CD4-positive, alpha-beta T cell (primary cell): ENCODE measurements at regions of chr5 and their contacts with region 1.

Region 1: DNA sequence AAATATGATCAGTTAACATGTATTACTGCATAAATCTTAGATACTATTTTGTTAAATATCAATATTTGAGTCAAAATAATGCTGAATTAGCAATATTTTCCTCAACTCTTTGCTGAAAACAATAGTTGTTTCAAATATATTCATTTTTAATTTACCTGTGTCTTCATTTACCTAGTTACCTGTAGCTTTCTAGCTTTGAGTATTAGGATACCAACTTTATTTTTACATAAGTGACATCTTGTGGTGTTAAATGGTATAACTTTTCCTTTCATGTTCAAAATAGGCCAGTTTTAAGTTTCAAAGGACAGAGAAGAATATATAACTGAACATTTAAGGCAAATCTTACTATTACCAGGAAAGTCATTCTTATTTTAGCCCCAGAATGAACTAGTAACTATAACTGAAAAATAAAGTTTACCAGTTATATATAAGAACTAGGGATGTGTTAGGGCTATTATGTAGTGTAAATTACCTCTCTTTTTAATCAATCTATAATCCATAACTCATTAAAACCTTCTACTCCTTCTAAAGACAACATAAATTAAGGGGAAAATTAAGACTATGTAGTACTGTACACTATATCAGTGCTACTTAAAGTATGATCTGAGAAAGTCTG is 25.3 kb downstream of the AP3B1 start:
- DNase-seq: peak in 3 of 14 experiments; percentile 28 to 38 (median 31)
- ATAC-seq: peak; percentile 68
- H3K4me3 ChIP-seq: no peak overlapping the region
- H3K4me3 Mint-ChIP-seq: no peak overlapping the region
- H3K27ac ChIP-seq: no peak overlapping the region
- H3K27ac Mint-ChIP-seq: no peak overlapping the region
- H3K4me1 ChIP-seq: no peaks in the 10 kb centered on the region
- H3K4me1 Mint-ChIP-seq: peaks cover 29% of the 10 kb centered on the region
- H3K27me3 ChIP-seq: no peaks in the 10 kb centered on the region
- H3K27me3 Mint-ChIP-seq: no peaks in the 10 kb centered on the region
- CTCF ChIP-seq: peak; percentile 68

Region 2: DNA sequence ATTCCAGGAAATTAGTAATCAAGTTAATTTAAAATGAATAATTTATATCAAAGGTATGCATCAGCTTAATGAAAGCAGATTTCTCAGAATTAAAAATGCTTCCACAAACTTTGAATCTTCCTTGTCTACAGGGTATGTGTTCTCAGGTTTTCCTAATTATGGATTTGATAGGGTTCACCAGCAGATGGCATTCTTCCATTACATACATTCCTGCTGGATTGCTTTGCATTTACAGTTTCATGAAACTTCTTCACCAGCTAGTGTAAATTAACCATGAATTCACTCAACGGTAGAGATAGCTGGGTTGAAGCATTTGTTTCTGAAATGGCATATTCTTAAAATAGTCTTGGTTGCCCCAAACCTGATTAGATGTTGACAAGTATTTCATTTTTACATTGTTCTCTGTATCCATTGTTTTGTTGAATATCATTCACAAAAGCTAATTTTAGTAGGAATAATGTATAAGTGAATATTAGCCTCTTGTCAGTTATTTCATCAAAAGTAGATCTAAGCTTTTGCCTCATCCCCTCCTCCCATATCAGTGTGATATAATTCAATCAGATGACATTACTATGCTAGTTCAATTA is 708.4 kb before region 1 on chr5:
- CTCF ChIA-PET with region 1: no interaction called
- POLR2A ChIA-PET with region 1: no interaction called
- intact Hi-C with region 1: loop called (anchors 5 to 10 kb)
- DNase-seq: peak in 3 of 14 experiments; percentile 21 to 35 (median 31)
- ATAC-seq: no peak
- H3K4me3 ChIP-seq: no peak overlapping the region
- H3K4me3 Mint-ChIP-seq: no peak overlapping the region
- H3K27ac ChIP-seq: no peak overlapping the region
- H3K27ac Mint-ChIP-seq: no peak overlapping the region
- H3K4me1 ChIP-seq: no peaks in the 10 kb centered on the region
- H3K4me1 Mint-ChIP-seq: no peaks in the 10 kb centered on the region
- H3K27me3 ChIP-seq: peaks cover 3 to 4% of the 10 kb centered on the region in 2 experiments
- H3K27me3 Mint-ChIP-seq: no peaks in the 10 kb centered on the region
- CTCF ChIP-seq: peak; percentile 27